WTC11 (cell line): ENCODE measurements at regions of chr2 and their contacts with region 1.

Region 1: DNA sequence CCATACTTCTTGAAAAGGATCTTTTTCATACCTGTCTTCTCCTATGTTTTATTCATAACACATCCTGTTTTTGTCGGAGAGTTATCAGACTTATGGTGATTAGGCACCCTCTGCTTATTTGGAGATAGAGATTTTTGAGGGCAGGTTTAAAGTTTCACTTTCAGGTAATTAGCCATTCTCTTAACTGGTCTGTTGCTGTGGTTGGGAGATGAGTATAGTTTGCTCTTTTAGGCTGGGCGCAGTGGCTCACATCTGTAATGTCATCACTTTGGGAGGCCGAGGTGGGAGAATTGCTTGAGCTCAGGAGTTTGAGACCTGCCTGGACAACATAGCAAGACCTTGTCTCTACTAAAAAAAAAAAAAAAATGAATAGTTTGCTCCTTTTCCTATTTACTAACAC is 25.3 kb downstream of the SFTPB start:
- DNase-seq: no peak
- ATAC-seq: no peak
- H3K4me3 Mint-ChIP-seq: no peak overlapping the region
- H3K27ac Mint-ChIP-seq: no peak overlapping the region
- H3K4me1 Mint-ChIP-seq: no peaks in the 10 kb centered on the region
- H3K27me3 Mint-ChIP-seq: no peaks in the 10 kb centered on the region; the same call in 1 of the 2 replicates
- CTCF ChIP-seq: no peak

Region 2: DNA sequence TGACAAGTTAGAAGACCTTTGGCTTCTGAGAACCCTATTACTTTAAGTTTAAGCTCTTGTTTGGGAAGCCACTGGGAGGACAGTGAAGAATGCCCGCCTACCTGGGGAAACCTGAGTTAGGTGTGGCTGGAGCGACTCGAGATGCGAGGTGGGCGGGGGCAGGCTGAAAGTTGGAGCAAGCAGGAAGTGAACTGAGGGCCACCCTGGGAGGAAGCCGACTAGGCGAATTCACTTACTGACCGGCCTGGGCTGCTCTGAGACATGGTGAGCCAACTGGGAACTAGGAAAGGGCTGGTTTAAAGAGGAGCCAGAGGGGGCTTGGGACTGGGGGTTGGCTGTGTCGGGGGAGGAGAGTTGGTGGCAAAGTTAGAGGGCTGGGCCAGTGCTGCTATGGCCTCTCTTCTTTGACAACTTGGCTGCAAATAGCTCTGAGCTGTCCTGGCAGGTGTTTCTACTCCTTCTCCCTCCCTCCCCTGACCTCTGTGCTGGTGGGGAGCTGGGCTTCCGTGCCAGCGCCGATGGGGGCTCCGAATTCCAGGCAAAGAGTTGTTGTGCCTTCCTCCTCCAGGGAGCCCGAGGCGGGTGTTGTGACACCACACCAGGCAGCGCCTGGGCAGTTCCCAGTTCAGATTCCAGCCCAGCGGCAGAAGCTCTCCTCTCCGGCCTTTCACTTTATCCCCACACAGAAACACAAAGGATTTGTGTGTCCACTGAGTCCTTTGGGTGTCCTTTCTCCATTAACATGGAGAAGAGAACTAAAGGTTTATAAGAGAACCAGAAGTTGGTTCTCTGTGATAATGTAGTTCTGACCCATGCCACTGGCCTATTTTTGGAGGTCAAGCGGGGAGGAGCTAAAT is 65.1 kb before region 1 on chr2 and contains the start of gene VAMP8:
- CTCF ChIA-PET with region 1: interaction called, 10 read pairs
- POLR2A ChIA-PET with region 1: no interaction called
- DNase-seq: peak; percentile 84
- ATAC-seq: peak; percentile 91
- H3K4me3 Mint-ChIP-seq: peak within 1 kb of the TSS; percentile 79
- H3K27ac Mint-ChIP-seq: peak within 1 kb of the TSS; percentile 64
- H3K4me1 Mint-ChIP-seq: peaks cover 35% of the 10 kb centered on the region
- H3K27me3 Mint-ChIP-seq: peaks cover 15% of the 10 kb centered on the region
- CTCF ChIP-seq: no peak
- total RNA-seq, gene VAMP8: 48.8 to 55.4 TPM (median 52.0 TPM) in 3 replicates

Region 3: DNA sequence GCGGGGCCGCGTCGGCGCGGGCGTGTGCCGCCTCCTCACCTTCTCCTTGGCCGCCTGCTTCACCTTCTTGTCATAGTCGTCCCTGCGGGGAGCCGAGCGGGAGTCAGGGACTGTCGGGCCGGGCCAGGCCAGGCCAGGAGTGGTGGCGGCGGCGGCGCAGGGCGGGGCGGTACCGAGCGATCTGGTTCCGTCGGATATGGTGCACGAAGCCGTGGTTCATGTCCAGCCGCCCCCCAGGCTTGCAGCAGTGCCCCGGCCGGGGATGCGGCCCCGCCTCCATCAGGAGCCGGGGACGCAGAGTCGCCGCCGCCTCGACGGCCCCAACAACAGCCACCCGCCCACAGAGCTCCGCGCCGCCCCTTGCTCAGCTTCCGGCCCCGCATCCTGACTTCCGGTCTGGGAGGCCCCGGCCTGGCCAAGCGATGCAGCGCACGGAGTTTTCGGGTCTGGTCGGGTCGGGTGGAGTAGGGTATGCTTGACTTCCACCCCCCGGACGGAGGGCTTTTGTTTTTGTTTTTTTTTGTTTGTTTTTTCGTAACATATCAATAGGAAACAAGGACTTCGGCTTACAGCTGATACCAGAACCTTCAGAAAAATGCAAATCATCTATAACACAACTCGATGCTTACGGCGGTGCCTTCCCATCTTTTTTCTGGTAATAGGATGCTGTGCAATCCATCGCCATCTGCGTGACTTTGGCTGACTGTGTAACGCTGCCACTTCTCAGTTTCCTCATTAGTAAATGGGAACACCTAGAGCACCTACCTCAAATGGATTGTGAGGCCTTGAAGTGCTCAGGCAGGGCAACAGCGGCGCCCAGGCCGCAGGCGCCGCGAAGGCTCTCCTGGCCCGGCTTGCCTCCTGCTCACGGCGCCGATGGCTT is 30.8 kb before region 1 on chr2 and contains the start of gene C2orf68:
- CTCF ChIA-PET with region 1: interaction called, 17 read pairs
- POLR2A ChIA-PET with region 1: interaction called, 3 read pairs
- DNase-seq: peak; percentile 92
- ATAC-seq: peak; percentile 85
- H3K4me3 Mint-ChIP-seq: peak within 1 kb of the TSS; percentile 98
- H3K27ac Mint-ChIP-seq: peak within 1 kb of the TSS; percentile 96
- H3K4me1 Mint-ChIP-seq: peaks cover 4% of the 10 kb centered on the region; the same call in 1 of the 2 replicates
- H3K27me3 Mint-ChIP-seq: no peaks in the 10 kb centered on the region
- CTCF ChIP-seq: no peak
- total RNA-seq, gene C2orf68: 63.8 to 69.6 TPM (median 65.0 TPM) in 3 replicates

Region 4: DNA sequence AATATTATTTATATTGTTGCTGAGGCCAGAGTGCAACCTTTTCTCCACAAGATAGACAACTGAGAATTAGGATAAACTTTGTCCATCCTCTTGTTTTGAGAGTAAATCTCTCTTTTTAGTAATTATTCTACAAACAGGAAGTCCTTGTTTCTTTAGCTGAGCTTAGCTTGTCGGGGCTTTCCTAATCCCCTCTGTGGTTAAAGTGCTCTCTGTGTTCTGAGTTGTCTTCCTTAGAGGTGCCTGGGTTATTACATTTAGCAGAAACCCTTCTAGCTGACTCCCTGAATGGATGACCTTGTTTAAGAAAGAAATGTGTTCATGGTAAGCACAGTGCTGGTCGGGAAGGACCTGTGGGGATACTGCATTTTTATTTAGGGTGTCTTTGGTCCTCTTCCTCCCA is 14.1 kb before region 1 on chr2:
- CTCF ChIA-PET with region 1: interaction called, 14 read pairs
- POLR2A ChIA-PET with region 1: no interaction called
- DNase-seq: no peak
- ATAC-seq: no peak
- H3K4me3 Mint-ChIP-seq: no peak overlapping the region
- H3K27ac Mint-ChIP-seq: no peak overlapping the region
- H3K4me1 Mint-ChIP-seq: no peaks in the 10 kb centered on the region
- H3K27me3 Mint-ChIP-seq: no peaks in the 10 kb centered on the region
- CTCF ChIP-seq: no peak

Region 5: GRCh38 chr2:85707304-85707703 is 64.6 kb after region 1 on chr2:
- CTCF ChIA-PET with region 1: interaction called, 18 read pairs
- POLR2A ChIA-PET with region 1: no interaction called
- DNase-seq: peak; percentile 47
- ATAC-seq: peak; percentile 82
- H3K4me3 Mint-ChIP-seq: no peak overlapping the region
- H3K27ac Mint-ChIP-seq: no peak overlapping the region
- H3K4me1 Mint-ChIP-seq: peaks cover 15% of the 10 kb centered on the region
- H3K27me3 Mint-ChIP-seq: peaks cover 12% of the 10 kb centered on the region
- CTCF ChIP-seq: peak; percentile 72; the same call in 1 of the 2 replicates

Region 6: GRCh38 chr2:85760371-85760770 is 117.6 kb after region 1 on chr2:
- CTCF ChIA-PET with region 1: no interaction called
- POLR2A ChIA-PET with region 1: no interaction called
- DNase-seq: no peak
- ATAC-seq: no peak
- H3K4me3 Mint-ChIP-seq: no peak overlapping the region
- H3K27ac Mint-ChIP-seq: no peak overlapping the region
- H3K4me1 Mint-ChIP-seq: peaks cover 14% of the 10 kb centered on the region
- H3K27me3 Mint-ChIP-seq: peaks cover 53% of the 10 kb centered on the region
- CTCF ChIP-seq: no peak

Region 7: GRCh38 chr2:85819811-85820510 is 177.2 kb after region 1 on chr2:
- CTCF ChIA-PET with region 1: no interaction called
- POLR2A ChIA-PET with region 1: no interaction called
- DNase-seq: no peak
- ATAC-seq: no peak
- H3K4me3 Mint-ChIP-seq: no peak overlapping the region
- H3K27ac Mint-ChIP-seq: no peak overlapping the region
- H3K4me1 Mint-ChIP-seq: peaks cover 6% of the 10 kb centered on the region
- H3K27me3 Mint-ChIP-seq: peaks cover 3% of the 10 kb centered on the region; the same call in 1 of the 2 replicates
- CTCF ChIP-seq: no peak

Region 8: DNA sequence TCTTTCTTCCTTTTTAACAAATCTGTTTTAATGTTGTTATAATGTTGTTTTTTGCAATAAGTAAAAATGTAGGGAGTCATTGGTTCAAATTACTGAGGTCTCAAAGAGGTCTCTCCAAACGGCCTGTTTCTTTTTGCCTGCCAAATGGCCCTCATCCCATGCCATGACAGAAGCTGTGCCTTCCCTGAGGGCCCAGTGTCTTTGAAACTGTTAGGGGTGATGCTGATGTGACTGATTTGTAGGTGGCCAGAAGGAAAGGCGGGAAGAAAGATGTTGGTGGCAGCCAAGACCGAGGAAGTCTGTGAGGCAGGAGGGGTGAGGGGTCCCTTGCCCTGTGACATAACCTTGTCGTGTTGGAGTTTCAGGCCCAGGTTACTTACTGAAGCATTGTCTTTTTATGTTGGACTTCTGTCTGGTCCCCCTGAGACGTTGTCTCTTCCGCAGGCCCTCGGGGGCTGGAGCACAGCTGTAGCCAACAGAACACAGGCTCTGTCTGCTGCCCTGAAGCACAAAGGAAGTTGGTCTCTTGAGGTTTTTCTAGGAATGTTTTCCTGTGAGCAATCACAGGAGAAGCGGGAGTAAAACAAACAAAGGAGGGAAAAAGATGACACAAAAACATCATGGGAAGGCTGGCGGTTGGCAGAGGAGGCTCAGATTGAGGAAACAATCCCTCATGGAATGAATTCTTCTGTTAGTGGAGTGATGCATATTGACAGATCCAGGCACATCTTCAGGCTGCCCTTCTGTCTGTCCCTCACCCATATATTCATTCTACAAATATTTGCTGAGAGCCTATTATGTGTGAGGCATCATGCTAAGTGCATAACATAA is 250.9 kb after region 1 on chr2:
- CTCF ChIA-PET with region 1: no interaction called
- POLR2A ChIA-PET with region 1: no interaction called
- DNase-seq: no peak
- ATAC-seq: no peak
- H3K4me3 Mint-ChIP-seq: no peak overlapping the region
- H3K27ac Mint-ChIP-seq: no peak overlapping the region
- H3K4me1 Mint-ChIP-seq: peaks cover 13% of the 10 kb centered on the region
- H3K27me3 Mint-ChIP-seq: peaks cover 16% of the 10 kb centered on the region
- CTCF ChIP-seq: no peak